ENCODE measurements at regions of chr17 and their contacts with region 1.

Region 1: DNA sequence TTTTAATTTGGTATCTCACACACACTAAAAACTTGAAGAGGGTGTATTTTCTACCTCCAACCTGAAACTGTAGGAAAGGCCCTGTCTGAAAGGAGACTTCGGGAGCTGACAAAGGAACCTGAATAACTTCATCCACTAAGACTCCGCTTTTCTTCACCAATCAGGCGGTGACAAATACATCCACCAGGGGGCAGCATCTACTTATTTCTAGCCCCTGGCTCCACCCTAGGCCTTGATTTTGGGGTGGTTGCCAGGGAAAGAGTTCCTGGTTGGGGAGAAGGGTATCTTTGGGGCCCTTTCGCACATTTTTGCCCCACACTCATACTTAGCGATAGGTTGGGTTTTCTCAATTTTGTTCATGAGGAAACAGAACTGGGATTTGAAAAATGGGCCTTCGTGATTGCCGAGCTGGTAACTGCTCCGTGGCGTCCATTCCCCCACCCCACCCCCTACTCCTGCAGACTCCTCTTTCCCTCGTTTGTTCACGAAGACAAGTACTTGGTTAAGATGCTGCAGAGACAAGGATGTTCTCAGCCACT is 4.8 kb upstream of the ARL4D start:
- DNase-seq: peak; percentile 90 to 96 (median 93)
- H3K4me3 ChIP-seq: no peak overlapping the region
- H3K27ac ChIP-seq: no peak overlapping the region
- H3K4me1 ChIP-seq: peaks cover 2% of the 10 kb centered on the region
- H3K27me3 ChIP-seq: no peaks in the 10 kb centered on the region
- CTCF ChIP-seq: peak; percentile 93 to 98 (median 96)
- EP300 ChIP-seq: no peak
- POLR2A ChIP-seq: peak; percentile 15

Region 2: GRCh38 chr17:43360739-43361505 is 33.1 kb before region 1 on chr17:
- intact Hi-C with region 1: no loop called
- DNase-seq: peak in 4 of 5 donors; percentile 86 to 94 (median 90)
- H3K4me3 ChIP-seq: peak overlapping the region; percentile 56
- H3K27ac ChIP-seq: peak overlapping the region; percentile 67 to 95
- H3K4me1 ChIP-seq: peaks cover 5% of the 10 kb centered on the region
- H3K27me3 ChIP-seq: no peaks in the 10 kb centered on the region
- CTCF ChIP-seq: peak in 1 of 3 donors; percentile 12
- EP300 ChIP-seq: no peak
- POLR2A ChIP-seq: peak; percentile 100

Region 3: DNA sequence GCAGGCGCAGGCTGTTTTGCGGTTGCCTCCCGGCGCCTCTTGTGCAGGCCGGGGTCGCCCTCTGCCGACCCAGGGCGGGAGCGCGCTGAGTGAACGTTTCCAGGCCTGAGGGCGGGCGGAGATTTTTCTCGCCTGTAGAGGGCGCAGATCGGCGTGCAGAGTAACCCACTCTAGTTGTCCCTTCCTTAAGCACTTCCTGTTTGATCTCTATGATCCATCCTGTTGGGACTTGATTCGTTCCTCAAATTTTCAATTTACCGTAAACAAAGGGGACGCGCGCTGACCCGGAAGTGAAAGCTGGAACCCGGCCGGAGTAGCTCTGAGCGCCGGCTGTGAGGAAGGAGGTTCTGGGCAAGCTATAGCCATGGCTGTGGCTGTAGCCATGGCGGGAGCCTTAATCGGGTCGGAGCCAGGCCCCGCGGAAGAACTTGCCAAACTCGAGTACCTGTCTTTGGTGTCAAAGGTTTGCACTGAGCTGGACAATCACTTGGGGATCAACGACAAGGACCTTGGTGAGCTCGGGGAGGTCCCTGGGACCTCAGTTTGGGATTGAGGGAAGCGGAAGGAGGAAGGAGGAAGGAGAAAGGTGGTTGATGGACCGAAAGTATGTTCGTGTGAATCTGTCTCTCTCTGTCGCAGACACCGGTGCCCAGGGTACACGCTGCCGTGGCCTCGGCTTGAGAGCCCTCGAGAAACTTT is 89.8 kb after region 1 on chr17 and contains the start of gene DHX8:
- intact Hi-C with region 1: loop called (anchors 1 to 2 kb)
- DNase-seq: peak; percentile 96 to 99 (median 98)
- H3K4me3 ChIP-seq: peak within 1 kb of the TSS; percentile 80
- H3K27ac ChIP-seq: peak within 1 kb of the TSS; percentile 6 to 41
- H3K4me1 ChIP-seq: peaks cover 11% of the 10 kb centered on the region
- H3K27me3 ChIP-seq: no peaks in the 10 kb centered on the region
- CTCF ChIP-seq: peak; percentile 100
- EP300 ChIP-seq: no peak
- POLR2A ChIP-seq: peak; percentile 47
- total RNA-seq, gene DHX8: 15.9 to 55.1 (median 37.3) TPM

Region 4: DNA sequence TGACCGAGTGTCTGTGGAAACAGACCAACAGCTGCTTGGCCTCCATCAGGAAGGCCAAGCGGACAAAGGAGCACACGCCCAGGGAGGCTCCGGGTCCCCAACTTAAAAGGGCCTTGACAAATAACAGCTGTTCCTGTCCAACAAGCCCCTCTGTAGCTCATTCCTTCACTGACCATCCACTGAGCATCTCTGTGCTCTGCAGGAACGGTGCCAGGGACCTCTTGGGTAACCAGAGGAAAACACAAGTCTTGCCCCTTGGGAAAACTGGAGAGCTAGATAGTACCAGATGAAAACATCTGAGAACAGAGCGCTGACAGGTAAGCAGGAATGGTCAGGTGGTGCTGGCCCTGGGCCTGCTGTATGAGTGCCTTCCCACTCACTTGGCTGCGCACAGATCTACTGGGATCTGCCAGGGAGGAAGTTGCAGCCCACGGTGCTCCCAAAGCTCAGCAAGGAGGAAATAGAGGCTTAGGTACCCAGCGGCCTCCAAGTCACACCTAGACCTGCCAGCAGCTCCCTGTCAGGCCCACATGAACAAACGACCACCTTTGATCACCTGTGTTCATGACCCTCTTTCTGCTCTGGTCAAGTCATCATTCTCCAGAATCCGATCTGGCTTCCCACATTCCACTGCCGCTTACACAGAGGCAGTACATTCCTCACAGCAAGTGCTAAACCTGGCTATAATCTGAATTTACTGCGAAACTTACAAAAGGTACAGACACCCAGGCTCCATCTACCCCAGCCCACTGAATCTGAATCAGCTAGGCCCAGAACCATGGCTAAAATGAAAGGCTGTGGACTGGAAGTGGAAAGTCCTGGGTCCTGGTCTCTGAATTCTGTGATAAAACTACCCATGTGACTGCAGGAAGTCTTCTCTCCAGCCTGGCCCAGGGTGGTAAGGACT is 1645.0 kb after region 1 on chr17:
- intact Hi-C with region 1: loop called in 1 of 4 experiments (anchors 5 kb)
- DNase-seq: peak in 3 of 5 donors; percentile 49 to 70 (median 65)
- H3K4me3 ChIP-seq: no peak overlapping the region
- H3K27ac ChIP-seq: no peak overlapping the region
- H3K4me1 ChIP-seq: peaks cover 18% of the 10 kb centered on the region
- H3K27me3 ChIP-seq: no peaks in the 10 kb centered on the region
- CTCF ChIP-seq: no peak
- EP300 ChIP-seq: no peak
- POLR2A ChIP-seq: no peak